Heart right ventricle (tissue), 16 donors: ENCODE measurements at regions of chr12 and their contacts with region 1.

Region 1: DNA sequence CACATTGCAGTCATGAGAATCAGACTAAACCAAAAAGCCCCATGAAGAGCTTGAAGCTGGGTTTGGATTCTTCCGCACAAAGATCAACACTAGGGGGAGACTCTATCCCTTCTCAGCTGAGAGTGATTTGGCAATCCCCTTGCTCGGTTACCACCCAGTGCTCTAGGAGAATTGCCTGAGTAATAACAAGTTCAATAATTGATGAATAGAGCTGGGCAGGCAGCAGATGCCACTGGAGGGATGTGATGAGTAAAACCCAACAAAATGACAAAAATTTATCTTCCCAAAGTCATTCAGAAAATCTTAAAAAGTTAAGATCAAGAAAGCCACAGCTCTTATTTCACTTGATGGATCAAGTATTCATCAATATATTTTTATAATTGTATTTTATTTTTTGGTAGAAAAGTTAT is 185.6 kb upstream of the ARID2 start:
- DNase-seq: peak in 1 of 2 donors; percentile 57
- ATAC-seq: peak in 7 of 8 donors; percentile 75 to 89 (median 84)
- H3K4me3 ChIP-seq: no peak overlapping the region
- H3K27ac ChIP-seq: no peak overlapping the region
- H3K4me1 ChIP-seq: peaks cover 0 to 3% (median 0%) of the 10 kb centered on the region in 9 donors
- H3K27me3 ChIP-seq: no peaks in the 10 kb centered on the region
- CTCF ChIP-seq: peak; percentile 52 to 86 (median 80)

Region 2: GRCh38 chr12:45268672-45269411 is 275.1 kb before region 1 on chr12:
- intact Hi-C with region 1: loop called in 1 of 10 experiments (anchors 5 kb)
- DNase-seq: peak; percentile 73 to 91
- ATAC-seq: peak; percentile 70 to 88 (median 82)
- H3K4me3 ChIP-seq: peak overlapping the region in 3 of 10 donors; percentile 6 to 18 (median 15)
- H3K27ac ChIP-seq: peak overlapping the region in 8 of 10 donors; percentile 19 to 69 (median 40)
- H3K4me1 ChIP-seq: peaks cover 9 to 87% (median 48%) of the 10 kb centered on the region in 9 donors
- H3K27me3 ChIP-seq: no peaks in the 10 kb centered on the region
- CTCF ChIP-seq: peak in 8 of 9 donors; percentile 30 to 70 (median 52)

Region 3: GRCh38 chr12:45446008-45446407 is 97.9 kb before region 1 on chr12:
- intact Hi-C with region 1: no loop called
- DNase-seq: no peak
- ATAC-seq: peak in 4 of 8 donors; percentile 21 to 68 (median 51)
- H3K4me3 ChIP-seq: no peak overlapping the region
- H3K27ac ChIP-seq: no peak overlapping the region
- H3K4me1 ChIP-seq: no peaks in the 10 kb centered on the region
- H3K27me3 ChIP-seq: no peaks in the 10 kb centered on the region
- CTCF ChIP-seq: no peak

Region 4: GRCh38 chr12:45728630-45729232 is 184.8 kb after region 1 on chr12:
- intact Hi-C with region 1: loop called in 3 of 10 experiments (anchors 5 to 10 kb)
- DNase-seq: peak; percentile 97 to 98
- ATAC-seq: peak; percentile 79 to 92 (median 84)
- H3K4me3 ChIP-seq: peak overlapping the region; percentile 60 to 95 (median 86)
- H3K27ac ChIP-seq: peak overlapping the region; percentile 94 to 99 (median 98)
- H3K4me1 ChIP-seq: peaks cover 7 to 51% (median 45%) of the 10 kb centered on the region in 9 donors
- H3K27me3 ChIP-seq: no peaks in the 10 kb centered on the region
- CTCF ChIP-seq: peak; percentile 89 to 99 (median 98)

Region 5: GRCh38 chr12:45887544-45887943 is 343.6 kb after region 1 on chr12:
- intact Hi-C with region 1: loop called in 2 of 10 experiments (anchors 10 kb)
- DNase-seq: no peak
- ATAC-seq: no peak
- H3K4me3 ChIP-seq: no peak overlapping the region
- H3K27ac ChIP-seq: no peak overlapping the region
- H3K4me1 ChIP-seq: peaks cover 0 to 4% (median 0%) of the 10 kb centered on the region in 9 donors
- H3K27me3 ChIP-seq: no peaks in the 10 kb centered on the region
- CTCF ChIP-seq: no peak

Region 6: GRCh38 chr12:46005151-46005797 is 461.4 kb after region 1 on chr12:
- intact Hi-C with region 1: loop called in 2 of 10 experiments (anchors 10 kb)
- DNase-seq: no peak
- ATAC-seq: no peak
- H3K4me3 ChIP-seq: no peak overlapping the region
- H3K27ac ChIP-seq: no peak overlapping the region
- H3K4me1 ChIP-seq: no peaks in the 10 kb centered on the region
- H3K27me3 ChIP-seq: no peaks in the 10 kb centered on the region
- CTCF ChIP-seq: peak in 7 of 9 donors; percentile 38 to 60 (median 50)